Breast epithelium (tissue), 4 donors: ENCODE measurements at regions of chr6 and their contacts with region 1.

Region 1: GRCh38 chr6:99092009-99092408 is 144.3 kb upstream of the FBXL4 start:
- DNase-seq: no peak
- H3K4me3 ChIP-seq: no peak overlapping the region
- H3K27ac ChIP-seq: no peak overlapping the region
- H3K4me1 ChIP-seq: no peaks in the 10 kb centered on the region
- H3K27me3 ChIP-seq: peaks cover 0 to 16% of the 10 kb centered on the region in 2 donors
- CTCF ChIP-seq: no peak
- POLR2A ChIP-seq: no peak

Region 2: GRCh38 chr6:98539741-98540140 is 552.3 kb before region 1 on chr6:
- intact Hi-C with region 1: loop called (anchors 5 kb)
- DNase-seq: no peak
- H3K4me3 ChIP-seq: no peak overlapping the region
- H3K27ac ChIP-seq: no peak overlapping the region
- H3K4me1 ChIP-seq: no peaks in the 10 kb centered on the region
- H3K27me3 ChIP-seq: no peaks in the 10 kb centered on the region
- CTCF ChIP-seq: no peak
- POLR2A ChIP-seq: no peak